Activated CD4-positive, alpha-beta T cell treated with anti-CD3 and anti-CD28 coated beads, Interleukin-2, amount 10 ng/mL, durations not matched to agents 24 days and 14 days (primary cell): ENCODE measurements at regions of chr2 and their contacts with region 1.

Region 1: DNA sequence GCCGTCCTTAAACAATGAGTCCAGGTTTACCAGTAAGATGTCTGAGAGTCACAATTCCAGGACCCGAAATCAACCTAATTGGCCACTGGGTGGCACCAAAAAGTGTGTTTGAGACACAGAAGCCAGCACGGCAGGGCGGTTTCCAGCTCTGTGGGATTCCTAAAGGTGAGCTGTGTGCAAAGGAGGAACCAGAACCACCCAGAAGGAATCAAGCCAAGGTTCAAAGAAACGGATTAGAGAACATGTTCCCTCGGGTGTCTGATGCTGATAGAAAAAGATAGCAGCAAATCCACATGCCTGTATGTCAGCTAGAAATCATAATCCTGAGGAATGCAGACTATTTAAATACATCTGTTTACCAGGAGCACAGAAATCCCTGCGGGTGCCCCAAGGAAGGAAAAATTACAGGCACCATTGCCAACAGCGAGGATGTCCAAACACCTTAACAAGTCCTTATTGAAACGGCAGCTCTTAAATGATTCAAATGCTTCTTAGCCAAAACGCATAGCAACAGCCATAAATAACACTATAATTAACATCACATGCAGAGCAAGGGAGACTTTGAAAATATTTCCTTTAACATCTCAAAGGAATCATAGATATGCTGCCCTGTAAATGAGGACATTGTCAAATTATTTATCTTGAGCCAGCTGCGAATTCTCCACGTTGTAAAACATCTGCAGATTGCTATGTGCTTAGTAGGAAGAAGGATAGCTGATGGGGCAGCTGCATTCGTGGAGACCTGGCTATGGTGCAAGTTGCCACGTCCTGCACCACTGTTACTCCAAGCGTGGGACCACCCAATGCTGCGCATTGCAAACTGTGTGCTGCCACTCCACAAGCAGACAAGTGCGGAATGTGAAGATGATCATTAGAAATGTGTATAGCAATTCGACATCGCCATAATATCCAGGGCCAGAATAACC is 318.7 kb upstream of the NCKAP5 start:
- DNase-seq: peak; percentile 82
- H3K4me3 Mint-ChIP-seq: no peak overlapping the region
- H3K27ac Mint-ChIP-seq: no peak overlapping the region
- H3K4me1 Mint-ChIP-seq: no peaks in the 10 kb centered on the region
- H3K27me3 Mint-ChIP-seq: peaks cover 1% of the 10 kb centered on the region

Region 2: DNA sequence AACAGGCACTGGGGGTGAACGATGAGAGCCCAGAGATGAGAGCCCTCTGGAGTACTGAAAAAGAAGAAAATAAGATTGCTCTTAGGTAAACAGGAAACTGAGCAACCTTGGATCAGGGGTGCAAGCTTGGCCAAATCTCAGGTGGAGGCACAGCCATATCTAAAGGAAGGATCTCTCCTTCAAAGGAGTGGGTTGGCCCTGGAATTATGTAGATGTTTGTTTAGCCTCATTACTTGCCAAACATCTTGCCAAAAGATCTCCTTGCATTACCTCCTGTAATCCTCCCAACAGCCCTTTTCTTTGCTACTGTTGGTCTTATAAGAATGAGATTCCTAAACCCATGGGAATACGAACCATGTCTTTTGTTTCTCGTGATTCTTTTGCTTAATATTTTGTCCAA is 13.9 kb after region 1 on chr2:
- intact Hi-C with region 1: no loop called
- DNase-seq: no peak
- H3K4me3 Mint-ChIP-seq: no peak overlapping the region
- H3K27ac Mint-ChIP-seq: no peak overlapping the region
- H3K4me1 Mint-ChIP-seq: no peaks in the 10 kb centered on the region
- H3K27me3 Mint-ChIP-seq: peaks cover 3% of the 10 kb centered on the region

Region 3: DNA sequence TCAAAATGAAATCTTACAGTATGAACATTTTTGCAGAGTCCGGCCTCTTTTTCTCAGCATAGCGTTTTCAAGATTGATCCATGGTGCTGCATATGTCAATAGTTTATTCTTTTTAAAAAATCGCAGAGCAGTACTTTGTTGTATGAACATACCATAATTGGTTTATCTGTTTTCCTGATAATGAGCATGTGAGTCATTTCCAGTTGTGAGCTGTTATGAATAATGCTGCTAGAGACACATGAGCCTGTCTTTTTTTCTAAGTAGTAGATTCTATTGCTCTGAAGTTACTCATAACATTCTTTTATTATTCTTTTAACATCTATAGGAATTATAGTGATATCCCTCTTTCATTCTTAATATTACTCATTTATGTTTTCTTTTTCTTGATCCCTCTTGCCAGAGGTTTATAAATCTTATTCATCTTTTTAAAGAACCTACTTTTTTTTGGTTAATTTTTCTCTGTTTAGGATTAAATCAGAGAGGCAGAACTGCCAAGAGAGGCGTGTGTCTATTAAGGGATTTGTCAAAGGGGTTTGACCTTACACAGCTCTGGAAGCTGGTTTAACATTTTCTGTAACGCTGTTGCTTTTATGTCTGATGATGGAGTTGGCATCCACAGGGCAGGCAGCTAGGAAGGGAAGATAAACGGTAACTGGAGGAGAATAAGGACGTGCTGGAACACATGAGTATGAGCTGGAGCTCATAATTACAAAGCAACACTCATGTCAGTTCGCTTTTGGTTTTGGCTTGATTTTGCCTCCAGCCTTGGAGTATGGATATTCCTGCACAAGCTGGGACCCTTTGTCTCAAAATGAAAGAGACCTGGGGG is 414.3 kb after region 1 on chr2:
- intact Hi-C with region 1: no loop called
- DNase-seq: no peak
- H3K4me3 Mint-ChIP-seq: no peak overlapping the region
- H3K27ac Mint-ChIP-seq: peak overlapping the region; percentile 8
- H3K4me1 Mint-ChIP-seq: peaks cover 25% of the 10 kb centered on the region
- H3K27me3 Mint-ChIP-seq: no peaks in the 10 kb centered on the region

Region 4: DNA sequence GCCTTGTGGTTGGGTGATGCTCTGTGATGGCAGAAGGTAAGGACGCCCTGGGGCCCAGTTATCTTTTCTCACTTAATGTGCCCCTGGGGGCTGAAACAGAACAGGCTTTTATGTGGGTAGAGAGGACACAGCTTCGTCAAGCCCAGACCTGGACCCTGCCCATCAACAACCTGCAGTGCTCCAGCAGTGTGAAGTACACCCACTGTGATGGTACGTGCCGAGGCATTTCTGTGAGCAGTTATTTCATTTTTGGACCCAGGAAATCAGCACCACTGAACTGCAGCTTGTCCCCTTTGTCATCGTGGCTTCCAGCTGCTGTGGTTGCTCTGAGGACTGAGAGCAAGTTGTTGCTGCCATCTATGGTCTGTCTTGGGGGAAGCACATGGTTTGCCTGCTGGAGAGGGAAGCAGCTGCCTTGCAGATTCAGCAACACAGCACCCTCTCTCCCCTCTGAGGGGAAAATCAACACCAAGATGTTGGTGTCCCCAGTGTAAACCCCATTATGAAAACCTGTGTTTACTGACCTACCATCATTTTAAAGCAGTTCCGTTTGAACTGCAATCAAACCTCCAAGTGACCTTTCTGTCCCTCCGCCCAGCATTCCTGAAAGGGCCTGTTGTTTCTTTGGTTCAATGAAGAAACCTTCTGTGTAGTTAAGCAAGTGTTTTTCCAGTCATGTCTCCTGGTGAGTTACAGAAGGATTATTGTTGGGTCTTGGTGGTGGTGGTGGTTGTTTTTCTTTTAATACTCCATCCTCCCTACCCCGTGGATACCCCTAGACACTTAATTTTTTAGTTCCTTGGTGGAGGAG is 525.0 kb after region 1 on chr2:
- intact Hi-C with region 1: loop called (anchors 5 kb)
- DNase-seq: peak; percentile 92
- H3K4me3 Mint-ChIP-seq: no peak overlapping the region
- H3K27ac Mint-ChIP-seq: no peak overlapping the region
- H3K4me1 Mint-ChIP-seq: peaks cover 19% of the 10 kb centered on the region
- H3K27me3 Mint-ChIP-seq: no peaks in the 10 kb centered on the region

Region 5: GRCh38 chr2:134457765-134458472 is 570.9 kb after region 1 on chr2:
- intact Hi-C with region 1: loop called (anchors 10 kb)
- DNase-seq: no peak
- H3K4me3 Mint-ChIP-seq: no peak overlapping the region
- H3K27ac Mint-ChIP-seq: no peak overlapping the region
- H3K4me1 Mint-ChIP-seq: no peaks in the 10 kb centered on the region
- H3K27me3 Mint-ChIP-seq: no peaks in the 10 kb centered on the region